Activated CD4-positive, alpha-beta T cell treated with anti-CD3 and anti-CD28 coated beads for 36 hours (primary cell): ENCODE measurements at regions of chr20 and their contacts with region 1.

Region 1: DNA sequence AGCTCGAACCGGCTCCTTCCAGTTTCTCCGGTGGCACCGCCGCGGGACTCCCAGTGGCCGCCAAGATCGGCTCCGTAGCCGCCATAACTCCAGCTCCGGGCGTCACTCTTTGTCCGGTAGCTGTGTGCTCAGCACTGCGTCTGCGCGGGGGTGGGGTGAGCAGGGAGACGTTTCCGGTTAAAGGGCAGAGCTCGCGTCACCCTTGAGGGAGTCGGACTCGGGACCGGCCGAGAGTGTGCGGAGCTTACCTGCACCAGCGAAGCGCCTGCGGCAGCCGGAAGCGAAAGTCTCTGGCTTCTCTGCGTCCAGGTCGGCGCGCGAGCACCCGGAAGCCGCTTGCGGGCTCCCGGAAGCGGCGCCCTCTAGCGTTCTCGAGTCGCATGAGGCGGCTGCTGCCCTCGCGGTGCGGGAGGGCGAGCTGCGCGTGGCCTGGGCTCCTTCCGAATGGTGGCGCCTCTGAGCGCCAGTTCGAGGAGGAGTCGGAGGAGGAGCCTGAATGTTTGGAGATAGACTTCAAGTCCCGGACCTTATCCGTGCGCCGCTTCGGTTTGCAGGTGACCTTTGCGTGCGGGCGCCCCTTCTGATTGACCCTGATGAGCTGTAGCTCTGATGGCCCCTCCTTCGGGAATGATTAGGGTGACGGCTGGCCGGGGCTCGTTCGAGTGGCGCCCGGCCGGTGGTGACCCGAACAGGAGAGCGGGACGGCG is at the start of gene SCAND1:
- DNase-seq: peak; percentile 99
- ATAC-seq: peak; percentile 91
- H3K4me3 Mint-ChIP-seq: peak within 1 kb of the TSS; percentile 97
- H3K27ac Mint-ChIP-seq: peak within 1 kb of the TSS; percentile 100
- H3K4me1 Mint-ChIP-seq: peaks cover 11% of the 10 kb centered on the region
- H3K27me3 Mint-ChIP-seq: no peaks in the 10 kb centered on the region
- total RNA-seq, gene SCAND1: 37.8 to 39.3 TPM

Region 2: GRCh38 chr20:35410613-35411012 is 543.7 kb before region 1 on chr20:
- CTCF ChIA-PET with region 1: interaction called, 4 read pairs
- POLR2A ChIA-PET with region 1: no interaction called
- intact Hi-C with region 1: loop called in 1 of 2 experiments (anchors 1 kb)
- DNase-seq: no peak
- ATAC-seq: no peak
- H3K4me3 Mint-ChIP-seq: peak overlapping the region; percentile 91
- H3K27ac Mint-ChIP-seq: peak overlapping the region; percentile 100
- H3K4me1 Mint-ChIP-seq: peaks cover 21% of the 10 kb centered on the region
- H3K27me3 Mint-ChIP-seq: no peaks in the 10 kb centered on the region

Region 3: DNA sequence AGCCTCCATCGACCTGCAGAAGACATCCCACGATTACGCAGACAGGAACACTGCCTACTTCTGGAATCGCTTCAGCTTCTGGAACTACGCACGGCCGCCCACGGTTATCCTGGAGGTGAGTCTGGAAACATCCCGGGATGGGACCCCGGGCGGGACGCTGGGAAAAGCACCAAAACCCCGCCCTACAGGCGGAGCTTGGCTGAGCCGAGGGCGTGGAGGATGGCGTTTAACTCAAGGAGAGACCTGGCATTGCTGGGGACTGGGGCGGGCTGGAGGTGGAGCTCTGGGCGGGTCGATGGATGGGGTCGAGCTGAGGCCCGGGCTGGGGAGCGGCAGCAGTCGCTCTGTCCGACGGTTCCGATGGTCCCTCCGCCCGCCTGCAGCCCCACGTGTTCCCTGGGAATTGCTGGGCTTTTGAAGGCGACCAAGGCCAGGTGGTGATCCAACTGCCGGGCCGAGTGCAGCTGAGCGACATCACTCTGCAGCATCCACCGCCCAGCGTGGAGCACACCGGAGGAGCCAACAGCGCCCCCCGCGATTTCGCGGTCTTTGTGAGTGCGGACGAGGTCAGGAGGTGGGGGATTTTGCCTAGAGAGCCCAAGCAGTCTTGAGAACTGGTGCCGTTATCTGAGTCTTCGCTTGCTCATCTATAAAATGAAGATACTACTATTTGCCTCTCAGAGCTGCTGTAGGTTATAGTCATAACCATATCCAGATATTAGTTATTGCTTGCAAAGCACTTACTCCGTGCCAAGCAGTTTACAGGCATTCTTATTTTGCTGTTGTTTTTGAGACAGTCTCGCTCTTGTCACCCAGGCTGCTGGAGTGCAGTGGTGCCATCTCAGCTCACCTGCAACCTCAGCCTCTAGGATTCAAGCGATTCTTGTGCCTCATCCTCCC is 334.9 kb before region 1 on chr20:
- CTCF ChIA-PET with region 1: interaction called, 6 read pairs
- POLR2A ChIA-PET with region 1: interaction called, 4 read pairs
- intact Hi-C with region 1: loop called (anchors 1 kb)
- DNase-seq: peak; percentile 93
- ATAC-seq: peak; percentile 51
- H3K4me3 Mint-ChIP-seq: peak overlapping the region; percentile 83
- H3K27ac Mint-ChIP-seq: peak overlapping the region; percentile 92
- H3K4me1 Mint-ChIP-seq: peaks cover 48% of the 10 kb centered on the region
- H3K27me3 Mint-ChIP-seq: peaks cover 2% of the 10 kb centered on the region

Region 4: DNA sequence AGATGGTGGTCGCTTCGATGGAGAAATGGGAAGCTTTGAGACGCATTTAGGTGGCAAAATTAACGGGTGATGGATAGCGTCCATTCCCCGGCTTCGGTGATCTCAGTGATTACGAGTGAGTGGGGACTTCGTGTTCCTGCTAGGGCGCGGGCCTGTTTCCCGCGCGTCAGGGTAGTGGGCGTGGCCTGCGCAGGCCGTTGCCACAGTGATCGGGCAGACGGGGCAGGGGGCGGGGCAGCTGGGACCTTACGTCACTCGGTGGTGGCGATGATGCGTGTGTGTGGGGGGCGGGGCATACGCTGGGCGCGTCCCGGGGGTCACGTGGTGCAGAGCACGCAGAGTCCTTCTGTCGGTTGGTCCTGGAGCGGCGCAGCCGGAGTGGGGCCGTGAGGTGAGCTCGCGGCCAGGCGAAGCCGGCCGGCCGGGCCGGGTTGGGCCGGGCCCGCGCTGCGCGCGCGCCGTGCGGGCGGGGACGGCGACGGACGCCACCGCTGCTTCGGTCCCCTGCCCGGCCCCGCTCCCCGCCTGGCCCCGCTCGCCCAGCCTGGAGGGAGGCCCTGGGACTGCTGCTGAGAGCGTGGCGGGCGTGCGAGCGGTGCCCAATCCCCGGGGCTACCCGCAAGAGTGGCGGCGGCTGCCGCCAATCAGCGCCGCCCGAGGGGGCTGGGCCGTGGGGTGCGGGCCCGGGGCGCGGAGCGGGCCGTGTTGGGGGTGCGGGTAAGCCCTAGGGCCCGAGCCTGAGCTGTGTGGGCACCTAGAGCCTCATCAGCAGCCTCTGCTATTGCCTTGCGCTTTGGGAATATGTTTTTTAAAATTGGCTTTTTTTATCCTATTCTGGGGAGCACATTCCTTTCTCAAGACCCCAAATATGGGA is 182.4 kb before region 1 on chr20 and contains the start of gene PHF20:
- CTCF ChIA-PET with region 1: interaction called, 6 read pairs
- POLR2A ChIA-PET with region 1: interaction called, 6 read pairs
- intact Hi-C with region 1: loop called (anchors 1 to 2 kb)
- DNase-seq: peak; percentile 100
- ATAC-seq: peak; percentile 91
- H3K4me3 Mint-ChIP-seq: peak within 1 kb of the TSS; percentile 81
- H3K27ac Mint-ChIP-seq: peak within 1 kb of the TSS; percentile 94
- H3K4me1 Mint-ChIP-seq: peaks cover 76% of the 10 kb centered on the region
- H3K27me3 Mint-ChIP-seq: no peaks in the 10 kb centered on the region
- total RNA-seq, gene PHF20: 54.3 to 61.6 TPM

Region 5: DNA sequence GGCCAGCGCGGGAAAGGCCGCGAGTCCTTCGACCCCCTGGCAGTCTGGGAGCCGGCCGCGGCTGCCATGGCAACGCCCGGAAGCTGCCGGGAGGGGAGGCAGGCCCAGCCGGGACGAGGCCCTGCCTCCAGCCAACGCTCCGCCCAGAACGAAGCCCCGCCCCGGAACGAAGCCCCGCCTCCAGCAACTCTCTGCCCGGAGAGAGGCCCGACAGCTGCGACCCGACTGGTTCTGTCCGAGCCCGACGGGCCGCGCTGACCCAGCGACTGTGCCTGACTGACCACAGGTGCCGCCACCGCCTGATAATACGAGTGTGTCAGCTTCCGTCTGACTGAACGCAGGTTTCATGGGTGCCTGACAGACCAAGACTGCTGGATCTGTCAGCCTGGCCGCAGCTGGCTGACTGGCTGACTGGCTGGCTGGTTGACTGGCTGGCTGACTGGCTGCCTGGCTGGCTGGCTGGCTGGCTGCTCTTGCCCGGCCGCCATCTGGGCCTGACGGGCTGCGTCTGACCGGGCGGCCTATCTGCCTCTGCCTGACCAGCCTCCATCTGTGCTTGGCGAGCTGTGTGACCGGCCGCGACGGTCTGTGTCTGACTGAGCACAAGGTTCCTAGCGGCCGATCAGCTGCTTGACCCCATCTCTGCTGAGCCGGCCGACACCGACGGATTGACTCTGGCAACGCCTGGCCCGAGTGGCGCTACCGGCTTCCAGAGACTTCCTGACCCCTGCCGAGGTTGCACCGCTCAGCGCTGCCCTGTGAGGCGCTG is 110.5 kb after region 1 on chr20:
- CTCF ChIA-PET with region 1: interaction called, 4 read pairs
- POLR2A ChIA-PET with region 1: interaction called, 3 read pairs
- intact Hi-C with region 1: loop called in 1 of 2 experiments (anchors 1 kb)
- DNase-seq: peak; percentile 95
- ATAC-seq: peak; percentile 98
- H3K4me3 Mint-ChIP-seq: peak overlapping the region; percentile 76
- H3K27ac Mint-ChIP-seq: no peak overlapping the region
- H3K4me1 Mint-ChIP-seq: no peaks in the 10 kb centered on the region
- H3K27me3 Mint-ChIP-seq: peaks cover 8% of the 10 kb centered on the region

Region 6: GRCh38 chr20:36605399-36606157 is 651.2 kb after region 1 on chr20 and contains the start of gene RAB5IF:
- CTCF ChIA-PET with region 1: interaction called, 7 read pairs
- POLR2A ChIA-PET with region 1: no interaction called
- intact Hi-C with region 1: loop called in 1 of 2 experiments (anchors 1 kb)
- DNase-seq: peak; percentile 100
- ATAC-seq: peak; percentile 91
- H3K4me3 Mint-ChIP-seq: peak within 1 kb of the TSS; percentile 100
- H3K27ac Mint-ChIP-seq: peak within 1 kb of the TSS; percentile 96
- H3K4me1 Mint-ChIP-seq: peaks cover 17% of the 10 kb centered on the region
- H3K27me3 Mint-ChIP-seq: no peaks in the 10 kb centered on the region
- total RNA-seq, gene RAB5IF: 71.7 to 90.2 TPM

Region 7: DNA sequence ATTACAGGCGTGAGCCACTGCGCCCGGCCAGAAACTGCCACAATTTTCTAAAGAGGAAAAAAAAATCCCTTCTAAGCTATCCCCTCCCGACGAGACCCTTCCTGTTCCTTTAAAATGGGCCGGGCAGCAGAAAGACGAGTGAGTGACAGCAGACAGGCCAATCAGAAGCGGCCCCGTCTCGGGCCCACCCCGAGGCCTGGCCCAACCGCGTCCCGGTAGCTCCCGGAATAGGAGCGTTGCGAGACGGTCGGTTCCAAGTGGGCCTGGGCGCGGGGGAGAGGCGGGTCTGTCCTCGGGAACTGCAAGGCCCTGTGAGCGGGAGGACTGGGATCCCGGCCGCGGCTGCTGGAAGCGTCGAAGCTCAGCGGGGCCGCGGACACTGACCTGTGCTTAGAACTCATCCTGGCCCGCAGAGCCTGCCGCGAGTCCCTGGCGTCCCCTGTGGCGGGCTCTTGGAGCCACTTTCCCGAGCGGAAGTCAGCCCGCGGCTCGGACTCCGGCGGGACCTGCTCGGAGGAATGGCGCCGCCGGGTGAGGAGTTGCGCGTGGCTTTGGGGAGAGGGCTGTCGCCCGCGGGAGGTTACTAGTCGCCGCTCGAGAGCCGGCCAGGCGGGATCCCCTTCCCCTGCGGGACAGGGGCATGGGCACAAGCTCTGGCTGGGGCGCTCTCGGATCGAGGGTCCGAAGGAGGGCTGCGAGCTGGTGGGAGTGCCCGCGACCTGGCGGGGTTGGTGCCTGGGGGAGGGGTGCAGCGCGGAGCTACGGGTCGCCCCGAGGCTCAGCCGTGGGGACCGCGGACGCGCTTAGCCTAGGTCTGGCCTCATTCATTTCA is 1224.7 kb after region 1 on chr20 and contains the starts of genes MROH8 and RPN2:
- CTCF ChIA-PET with region 1: no interaction called
- POLR2A ChIA-PET with region 1: no interaction called
- intact Hi-C with region 1: loop called in 1 of 2 experiments (anchors 2 kb)
- DNase-seq: peak; percentile 98
- ATAC-seq: peak; percentile 97
- H3K4me3 Mint-ChIP-seq: peak within 1 kb of the TSS; percentile 87
- H3K27ac Mint-ChIP-seq: peak within 1 kb of the TSS; percentile 92
- H3K4me1 Mint-ChIP-seq: peaks cover 33% of the 10 kb centered on the region
- H3K27me3 Mint-ChIP-seq: no peaks in the 10 kb centered on the region
- total RNA-seq, gene MROH8: 3.0 to 4.5 TPM
- total RNA-seq, gene RPN2: 103 to 115 TPM